HepG2 (cell line): ENCODE measurements at regions of chr1 and their contacts with region 1.

Region 1: GRCh38 chr1:218553203-218553602 is 208.1 kb downstream of the TGFB2 start:
- DNase-seq: no peak
- ATAC-seq: no peak; the same call in 2 of the 3 replicates
- H3K4me3 ChIP-seq: no peak overlapping the region
- H3K27ac ChIP-seq: no peak overlapping the region
- H3K4me1 ChIP-seq: no peaks in the 10 kb centered on the region
- H3K27me3 ChIP-seq: no peaks in the 10 kb centered on the region
- CTCF ChIP-seq: peak; percentile 45
- EP300 ChIP-seq: no peak
- POLR2A ChIP-seq: no peak
- RAD21 ChIP-seq: no peak

Region 2: GRCh38 chr1:218339267-218339831 is 213.9 kb before region 1 on chr1:
- CTCF ChIA-PET with region 1: no interaction called
- POLR2A ChIA-PET with region 1: no interaction called
- in situ Hi-C with region 1: no loop called
- intact Hi-C with region 1: loop called (anchors 1 kb)
- DNase-seq: peak; percentile 19
- ATAC-seq: no peak
- H3K4me3 ChIP-seq: no peak overlapping the region
- H3K27ac ChIP-seq: no peak overlapping the region
- H3K4me1 ChIP-seq: peaks cover 7% of the 10 kb centered on the region
- H3K27me3 ChIP-seq: no peaks in the 10 kb centered on the region
- CTCF ChIP-seq: peak; percentile 58
- EP300 ChIP-seq: no peak
- POLR2A ChIP-seq: no peak
- RAD21 ChIP-seq: no peak